Lower lobe of right lung (tissue), 2 donors: ENCODE measurements at regions of chr2 and their contacts with region 1.

Region 1: DNA sequence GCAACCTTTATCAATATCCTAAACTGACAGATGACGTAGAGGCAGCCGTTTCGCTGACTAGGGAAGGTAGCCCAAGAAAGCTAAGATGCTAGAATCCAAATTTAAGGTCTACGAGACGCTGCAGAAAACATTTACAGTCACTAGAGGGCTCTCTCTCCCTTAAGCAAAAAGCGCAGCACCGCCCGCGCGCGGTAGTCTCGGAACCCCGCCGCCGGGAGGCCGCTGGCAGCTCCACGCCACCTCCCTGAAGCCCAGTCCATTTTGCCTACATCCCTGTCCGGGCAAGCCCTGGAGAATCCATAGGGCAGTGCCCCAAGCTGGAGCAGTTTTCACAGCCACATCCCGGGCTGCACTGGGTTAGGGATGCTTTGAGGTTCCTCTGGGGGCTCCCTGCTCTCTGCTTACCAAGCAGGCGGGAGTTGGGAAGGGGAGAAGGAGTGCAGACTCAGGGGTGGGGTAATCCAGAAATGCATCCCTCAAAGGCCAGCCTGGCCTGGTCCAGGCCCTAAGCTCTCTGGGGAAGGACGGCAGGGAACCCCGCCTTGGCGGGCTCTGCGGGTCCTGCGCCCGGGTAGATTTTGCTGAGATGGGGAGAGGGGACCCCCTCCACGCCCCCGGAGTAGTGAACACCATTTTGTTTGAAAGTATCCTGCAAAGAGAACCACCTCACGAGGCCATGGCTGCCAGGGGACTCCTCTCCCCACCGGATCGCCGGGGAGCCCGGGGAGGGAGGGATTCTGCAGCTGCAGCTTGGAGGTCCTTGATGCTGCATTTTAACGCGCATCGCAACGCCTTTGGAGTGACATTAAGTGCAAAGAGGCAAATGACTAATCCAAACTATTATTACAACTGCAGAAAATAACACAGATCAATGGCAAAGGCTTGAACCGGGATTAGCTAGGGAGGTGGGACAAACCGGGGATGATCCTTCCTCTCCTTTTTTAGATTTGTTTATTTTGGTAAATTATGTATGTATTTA is 1.3 kb upstream of the DPYSL5 start:
- DNase-seq: peak; percentile 80
- ATAC-seq: peak; percentile 83 to 85
- H3K4me3 ChIP-seq: no peak overlapping the region
- H3K27ac ChIP-seq: no peak overlapping the region
- H3K4me1 ChIP-seq: peaks cover 38% of the 10 kb centered on the region
- H3K27me3 ChIP-seq: peaks cover 88% of the 10 kb centered on the region
- CTCF ChIP-seq: peak; percentile 78

Region 2: DNA sequence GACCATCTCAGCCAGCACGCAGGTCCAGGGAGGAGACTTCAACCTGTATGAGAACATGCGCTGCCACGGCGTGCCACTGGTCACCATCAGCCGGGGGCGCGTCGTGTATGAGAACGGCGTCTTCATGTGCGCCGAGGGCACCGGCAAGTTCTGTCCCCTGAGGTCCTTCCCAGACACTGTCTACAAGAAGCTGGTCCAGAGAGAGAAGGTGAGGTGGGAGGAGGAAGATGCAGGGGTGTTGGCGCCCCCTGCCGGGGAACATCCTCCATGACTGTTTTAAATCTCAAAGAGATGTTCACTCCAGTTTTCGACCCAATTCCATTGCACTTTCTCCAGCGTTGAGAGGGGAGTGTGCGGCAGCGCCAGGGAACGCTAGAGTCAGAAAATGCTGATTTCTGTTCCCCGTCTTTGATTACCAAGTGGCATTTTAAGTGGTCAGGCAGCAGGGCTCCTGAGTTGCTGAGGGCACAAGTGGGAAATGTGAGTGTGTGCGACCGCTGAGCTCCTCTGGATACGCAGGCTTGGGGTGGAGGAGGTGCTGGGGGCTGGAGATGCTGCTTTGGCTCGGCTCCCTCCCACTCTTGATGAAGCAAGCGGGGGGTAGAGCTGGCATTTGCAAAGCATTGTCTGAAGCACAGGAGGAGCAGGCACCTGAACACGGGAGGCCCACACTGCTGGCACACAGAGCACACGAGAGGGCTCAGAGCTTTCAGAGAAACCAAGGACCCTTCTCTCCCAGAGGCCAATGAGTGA is 96.1 kb after region 1 on chr2:
- intact Hi-C with region 1: loop called (anchors 10 kb)
- DNase-seq: peak; percentile 76
- ATAC-seq: peak; percentile 61 to 64
- H3K4me3 ChIP-seq: no peak overlapping the region
- H3K27ac ChIP-seq: no peak overlapping the region
- H3K4me1 ChIP-seq: peaks cover 8% of the 10 kb centered on the region
- H3K27me3 ChIP-seq: peaks cover 33% of the 10 kb centered on the region
- CTCF ChIP-seq: peak; percentile 78